ENCODE measurements at regions of chr16 and their contacts with region 1.

Region 1: GRCh38 chr16:4734063-4734729 is at the starts of genes ANKS3 and DNAAF8:
- DNase-seq: peak; percentile 67 to 87 (median 82)
- ATAC-seq: peak; percentile 77 to 78
- H3K4me3 Mint-ChIP-seq: peak within 1 kb of the TSS; percentile 87 to 95 (median 92)
- H3K27ac Mint-ChIP-seq: peak within 1 kb of the TSS; percentile 86 to 95 (median 94)
- H3K4me1 Mint-ChIP-seq: peaks cover 10 to 23% (median 18%) of the 10 kb centered on the region in 4 donors
- H3K27me3 Mint-ChIP-seq: no peaks in the 10 kb centered on the region
- polyA plus RNA-seq, gene ANKS3: 4.3 to 9.0 (median 4.5) TPM
- polyA plus RNA-seq, gene DNAAF8: 0.34 to 0.48 TPM in 2 of 3 donors, not detected in the other

Region 2: GRCh38 chr16:4624015-4624826 is 110.0 kb before region 1 on chr16 and contains the start of gene MGRN1:
- POLR2A ChIA-PET with region 1: interaction called, 12 read pairs
- DNase-seq: peak; percentile 87 to 94 (median 90)
- ATAC-seq: peak; percentile 90 to 92
- H3K4me3 Mint-ChIP-seq: peak within 1 kb of the TSS; percentile 91 to 96 (median 94)
- H3K27ac Mint-ChIP-seq: peak within 1 kb of the TSS; percentile 95 to 99 (median 98)
- H3K4me1 Mint-ChIP-seq: peaks cover 20 to 43% (median 32%) of the 10 kb centered on the region in 4 donors
- H3K27me3 Mint-ChIP-seq: no peaks in the 10 kb centered on the region
- polyA plus RNA-seq, gene MGRN1: 4.5 to 5.8 (median 5.6) TPM

Region 3: DNA sequence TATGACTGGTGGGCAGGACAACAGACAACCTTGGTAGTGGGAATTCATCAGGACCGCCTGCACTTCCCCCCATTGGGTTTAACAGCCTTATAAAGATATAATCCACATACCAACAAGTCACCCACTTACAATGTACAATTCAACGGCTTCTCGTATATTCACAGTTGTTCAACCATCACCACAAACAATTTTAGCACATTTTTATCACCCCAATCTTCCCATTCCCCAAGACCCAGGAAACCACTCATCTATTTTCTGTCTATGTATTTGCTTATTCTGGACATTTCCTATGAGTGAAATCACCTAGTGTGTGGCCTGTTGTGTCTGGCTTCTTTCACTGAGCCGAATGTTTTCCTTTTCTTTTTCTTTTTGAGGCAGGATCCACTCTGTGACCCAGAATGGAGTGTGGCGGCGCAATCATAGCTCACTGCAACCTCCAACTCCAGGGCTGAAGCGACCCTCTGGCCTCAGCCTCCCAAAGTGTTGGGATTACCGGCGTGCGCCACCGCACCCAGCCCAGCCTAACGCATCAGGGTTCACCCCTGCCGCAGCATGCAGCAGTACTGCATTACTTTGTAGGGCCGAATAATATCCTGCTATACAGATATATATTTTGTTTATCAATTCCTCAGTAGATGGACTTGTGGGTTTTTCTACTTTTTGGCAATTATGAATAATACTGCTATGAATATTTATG is 11.0 kb before region 1 on chr16:
- POLR2A ChIA-PET with region 1: interaction called, 14 read pairs
- DNase-seq: no peak
- ATAC-seq: no peak
- H3K4me3 Mint-ChIP-seq: no peak overlapping the region
- H3K27ac Mint-ChIP-seq: peak overlapping the region in 3 of 10 donors; percentile 36 to 89 (median 62)
- H3K4me1 Mint-ChIP-seq: peaks cover 0 to 2% (median 0%) of the 10 kb centered on the region in 4 donors
- H3K27me3 Mint-ChIP-seq: no peaks in the 10 kb centered on the region

Region 4: DNA sequence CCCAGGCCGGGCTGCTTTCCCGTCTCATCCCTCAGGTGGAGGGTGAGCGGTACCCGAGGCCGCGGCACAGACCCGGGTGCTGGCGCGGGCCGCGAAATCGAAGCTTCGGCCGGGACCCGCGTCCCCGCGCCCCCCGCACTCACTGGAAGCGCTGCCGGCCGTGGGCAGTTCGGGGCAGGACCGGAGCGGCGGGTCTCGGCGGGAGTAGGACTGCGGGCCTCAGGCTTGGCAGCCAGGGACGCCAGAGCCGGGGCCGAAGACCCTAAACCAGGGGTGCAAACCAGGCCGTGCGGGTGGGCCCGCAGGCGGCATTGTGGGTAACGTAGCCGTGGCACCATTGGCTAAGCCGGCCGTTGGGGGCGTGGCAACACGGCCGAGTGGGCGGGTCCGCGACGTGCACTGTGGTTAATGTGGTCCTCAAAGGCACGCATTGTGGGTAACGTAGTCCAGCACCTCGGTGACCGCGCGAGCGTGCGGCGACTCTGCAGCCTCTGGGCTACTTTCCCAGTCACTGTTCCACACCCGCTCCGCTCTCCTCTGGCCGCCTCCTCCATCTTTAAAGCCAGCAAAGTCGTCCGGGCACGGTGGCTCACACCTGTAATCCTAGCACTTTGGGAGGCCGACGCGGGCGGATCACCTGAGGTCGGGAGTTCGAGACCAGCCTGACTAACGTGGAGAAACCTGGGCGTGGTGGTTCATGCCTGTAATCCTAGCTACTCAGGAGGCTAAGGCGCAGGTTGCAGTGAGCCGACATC is 32.9 kb after region 1 on chr16 and contains the start of gene ZNF500:
- POLR2A ChIA-PET with region 1: interaction called, 60 read pairs
- DNase-seq: peak; percentile 88 to 97 (median 94)
- ATAC-seq: peak; percentile 86 to 94
- H3K4me3 Mint-ChIP-seq: peak within 1 kb of the TSS; percentile 88 to 95 (median 92)
- H3K27ac Mint-ChIP-seq: peak within 1 kb of the TSS; percentile 86 to 96 (median 94)
- H3K4me1 Mint-ChIP-seq: peaks cover 16 to 48% (median 34%) of the 10 kb centered on the region in 4 donors
- H3K27me3 Mint-ChIP-seq: no peaks in the 10 kb centered on the region
- polyA plus RNA-seq, gene ZNF500: 14.3 to 17.3 (median 16.8) TPM

Region 5: DNA sequence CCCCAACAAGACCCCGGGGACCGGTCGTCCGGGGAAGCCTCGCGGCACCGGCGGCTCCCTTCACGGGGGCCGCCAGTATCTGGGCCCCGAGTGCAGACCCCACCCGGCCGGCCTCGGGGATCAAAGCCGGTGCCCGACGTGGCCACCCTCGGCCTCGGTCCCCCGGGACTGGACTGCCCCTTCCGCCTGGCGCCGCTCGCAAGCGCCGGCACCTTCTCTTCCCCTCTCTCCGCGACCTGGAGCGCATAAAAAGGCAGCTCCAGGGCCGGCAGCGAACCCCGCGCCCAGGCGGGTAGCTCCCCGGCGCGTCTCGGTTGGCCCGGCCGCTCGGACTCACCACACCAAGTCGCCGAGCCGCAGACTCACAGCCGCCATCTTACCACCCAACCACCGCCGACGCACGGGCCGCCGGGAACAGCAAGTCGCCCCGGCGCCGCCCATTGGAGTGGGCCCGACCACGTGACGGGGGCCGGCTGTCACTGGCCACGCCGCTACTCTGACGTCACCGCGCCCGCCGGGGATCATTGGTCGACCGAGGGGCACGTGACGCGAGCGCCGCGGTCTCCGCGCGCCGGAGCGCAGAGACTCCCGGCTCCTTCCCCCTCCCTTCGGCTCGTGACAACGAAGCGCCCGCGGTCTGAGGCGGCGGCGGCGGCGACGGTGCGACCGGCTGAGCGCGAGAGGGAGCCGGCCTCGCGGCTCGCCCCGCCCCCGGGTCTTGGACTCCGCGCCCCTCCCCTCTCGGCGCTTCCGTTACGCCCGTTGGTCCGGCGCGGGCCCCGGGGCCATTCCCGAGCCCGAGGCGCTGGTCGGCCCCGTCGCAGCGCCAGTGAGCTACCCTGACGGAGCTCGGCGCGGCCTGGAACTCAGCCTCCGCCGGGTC is 112.9 kb after region 1 on chr16 and contains the starts of genes GLYR1 and UBN1:
- POLR2A ChIA-PET with region 1: interaction called, 14 read pairs
- DNase-seq: peak; percentile 97 to 100 (median 100)
- ATAC-seq: peak; percentile 88 to 93
- H3K4me3 Mint-ChIP-seq: peak within 1 kb of the TSS; percentile 87 to 95 (median 92)
- H3K27ac Mint-ChIP-seq: peak within 1 kb of the TSS; percentile 61 to 96 (median 94)
- H3K4me1 Mint-ChIP-seq: peaks cover 14 to 60% (median 56%) of the 10 kb centered on the region in 4 donors
- H3K27me3 Mint-ChIP-seq: no peaks in the 10 kb centered on the region
- polyA plus RNA-seq, gene GLYR1: 29.7 to 39.6 (median 38.1) TPM
- polyA plus RNA-seq, gene UBN1: 10.9 to 18.4 (median 14.2) TPM

Measured in naive thymus-derived CD8-positive, alpha-beta T cell (primary cell).